ENCODE measurements at regions of chr19 and their contacts with region 1.

Region 1: GRCh38 chr19:44988896-44989556 is 12.2 kb upstream of the RELB start:
- DNase-seq: peak; percentile 85
- CTCF ChIP-seq: peak; percentile 71

Region 2: DNA sequence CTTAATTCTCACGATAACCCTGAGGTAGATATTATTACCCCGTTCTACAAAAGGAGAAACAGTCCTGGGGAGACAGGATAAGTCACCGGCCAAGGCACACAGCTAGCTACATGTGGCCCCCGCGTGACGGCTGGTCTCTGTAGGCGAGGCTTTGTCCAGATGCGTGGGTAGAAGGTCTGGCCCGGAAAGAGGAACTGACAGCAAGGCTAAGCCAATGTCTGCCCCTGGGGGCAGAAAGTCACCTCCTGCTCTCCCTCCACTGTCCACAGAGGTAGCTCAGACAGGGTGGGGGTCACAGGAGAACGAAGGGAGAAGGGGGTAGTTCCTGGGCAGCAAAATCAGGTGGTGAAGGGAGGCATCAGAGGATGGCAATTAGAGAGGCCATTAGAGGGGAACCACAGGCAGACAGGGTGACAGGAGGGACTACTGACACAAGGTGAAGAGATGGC is 45.2 kb before region 1 on chr19:
- CTCF ChIA-PET with region 1: no interaction called
- POLR2A ChIA-PET with region 1: no interaction called
- DNase-seq: peak; percentile 90
- CTCF ChIP-seq: peak; percentile 3

Region 3: GRCh38 chr19:44974857-44975256 is 14.2 kb before region 1 on chr19:
- CTCF ChIA-PET with region 1: interaction called, 39 read pairs
- POLR2A ChIA-PET with region 1: no interaction called
- DNase-seq: no peak
- CTCF ChIP-seq: no peak

Region 4: DNA sequence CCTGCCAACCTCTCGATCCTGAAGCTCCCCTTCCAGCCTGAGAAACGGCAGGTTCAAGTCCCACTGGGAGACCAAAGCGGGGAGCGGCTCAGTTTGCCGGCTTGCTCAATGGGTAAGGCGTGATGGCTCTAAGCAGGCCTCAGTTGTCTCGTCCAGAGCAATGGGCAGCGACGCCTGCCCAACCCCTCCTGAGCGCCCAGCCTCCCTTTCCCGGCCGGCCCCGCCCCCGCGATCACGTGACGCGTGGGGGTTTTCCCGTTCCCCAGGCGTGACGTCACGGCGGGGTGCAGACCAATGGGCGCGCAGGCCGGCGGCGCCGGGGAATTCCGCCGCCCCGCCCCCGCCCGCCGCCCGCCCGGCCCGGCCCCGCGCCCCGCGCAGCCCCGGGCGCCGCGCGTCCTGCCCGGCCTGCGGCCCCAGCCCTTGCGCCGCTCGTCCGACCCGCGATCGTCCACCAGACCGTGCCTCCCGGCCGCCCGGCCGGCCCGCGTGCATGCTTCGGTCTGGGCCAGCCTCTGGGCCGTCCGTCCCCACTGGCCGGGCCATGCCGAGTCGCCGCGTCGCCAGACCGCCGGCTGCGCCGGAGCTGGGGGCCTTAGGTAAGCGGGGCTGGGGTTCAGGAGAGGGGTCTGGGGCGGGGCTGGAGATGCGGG is 12.2 kb after region 1 on chr19 and contains the start of gene RELB:
- CTCF ChIA-PET with region 1: interaction called, 28 read pairs
- POLR2A ChIA-PET with region 1: no interaction called
- DNase-seq: peak; percentile 98
- CTCF ChIP-seq: no peak